ENCODE measurements at regions of chr2 and their contacts with region 1.

Region 1: DNA sequence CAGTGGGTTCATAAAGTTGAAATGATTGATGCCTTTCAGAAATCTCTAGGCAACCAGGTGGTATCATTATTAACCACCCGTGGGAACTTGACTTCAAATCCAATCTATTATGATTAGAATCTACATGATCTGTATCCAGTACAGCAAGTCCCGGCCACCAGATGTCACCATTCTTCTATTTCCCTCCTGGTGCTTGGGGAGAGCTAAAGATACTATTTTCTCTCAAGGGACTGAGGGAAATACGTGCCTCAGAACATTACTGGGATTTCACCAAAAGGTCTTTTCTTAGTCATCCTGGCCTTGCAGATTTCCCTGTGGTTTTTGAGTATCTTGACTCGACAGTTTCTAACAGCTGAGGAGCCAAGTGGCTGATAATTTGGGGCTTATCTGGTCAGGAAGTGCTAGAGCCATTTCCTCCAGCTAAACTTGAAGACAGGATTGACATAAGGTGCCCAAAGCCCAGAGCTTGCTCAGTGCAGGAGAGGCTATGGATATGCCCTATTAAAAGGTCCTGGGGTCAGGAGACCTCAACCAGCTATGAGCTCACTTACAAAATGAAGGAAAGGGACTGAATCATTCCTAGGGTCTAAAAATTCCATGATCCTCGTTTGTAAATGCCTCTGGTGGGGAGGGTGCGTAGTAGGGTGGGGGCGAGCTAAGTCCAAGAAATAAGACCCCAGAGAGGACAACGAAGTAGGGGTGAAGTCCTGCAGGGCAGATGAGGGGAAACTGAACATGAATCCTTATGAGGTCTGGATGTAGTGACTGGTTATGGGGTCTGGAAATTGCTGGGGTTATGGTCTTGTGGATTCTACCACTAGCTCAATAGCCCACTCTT is 135.4 kb upstream of the MGAT5 start:
- DNase-seq: peak; percentile 91
- H3K4me3 ChIP-seq: no peak overlapping the region
- H3K27ac ChIP-seq: peak overlapping the region; percentile 24 to 97 (median 94)
- H3K4me1 ChIP-seq: peaks cover 11 to 33% (median 32%) of the 10 kb centered on the region in 4 donors
- H3K27me3 ChIP-seq: no peaks in the 10 kb centered on the region
- CTCF ChIP-seq: peak; percentile 71 to 84 (median 79)
- EP300 ChIP-seq: no peak
- POLR2A ChIP-seq: no peak

Region 2: GRCh38 chr2:134154246-134154645 is 35.7 kb after region 1 on chr2:
- in situ Hi-C with region 1: no loop called
- intact Hi-C with region 1: no loop called
- DNase-seq: peak; percentile 37
- H3K4me3 ChIP-seq: no peak overlapping the region
- H3K27ac ChIP-seq: no peak overlapping the region
- H3K4me1 ChIP-seq: peaks cover 3 to 29% (median 11%) of the 10 kb centered on the region in 4 donors
- H3K27me3 ChIP-seq: no peaks in the 10 kb centered on the region
- CTCF ChIP-seq: no peak
- EP300 ChIP-seq: no peak
- POLR2A ChIP-seq: no peak

Region 3: GRCh38 chr2:134207564-134208209 is 89.2 kb after region 1 on chr2:
- in situ Hi-C with region 1: loop called in 3 of 4 experiments (anchors 5 to 10 kb)
- intact Hi-C with region 1: no loop called
- DNase-seq: peak; percentile 79
- H3K4me3 ChIP-seq: no peak overlapping the region
- H3K27ac ChIP-seq: no peak overlapping the region
- H3K4me1 ChIP-seq: peaks cover 0 to 31% (median 2%) of the 10 kb centered on the region in 4 donors
- H3K27me3 ChIP-seq: no peaks in the 10 kb centered on the region
- CTCF ChIP-seq: peak; percentile 56 to 86 (median 63)
- EP300 ChIP-seq: no peak
- POLR2A ChIP-seq: no peak

Region 4: DNA sequence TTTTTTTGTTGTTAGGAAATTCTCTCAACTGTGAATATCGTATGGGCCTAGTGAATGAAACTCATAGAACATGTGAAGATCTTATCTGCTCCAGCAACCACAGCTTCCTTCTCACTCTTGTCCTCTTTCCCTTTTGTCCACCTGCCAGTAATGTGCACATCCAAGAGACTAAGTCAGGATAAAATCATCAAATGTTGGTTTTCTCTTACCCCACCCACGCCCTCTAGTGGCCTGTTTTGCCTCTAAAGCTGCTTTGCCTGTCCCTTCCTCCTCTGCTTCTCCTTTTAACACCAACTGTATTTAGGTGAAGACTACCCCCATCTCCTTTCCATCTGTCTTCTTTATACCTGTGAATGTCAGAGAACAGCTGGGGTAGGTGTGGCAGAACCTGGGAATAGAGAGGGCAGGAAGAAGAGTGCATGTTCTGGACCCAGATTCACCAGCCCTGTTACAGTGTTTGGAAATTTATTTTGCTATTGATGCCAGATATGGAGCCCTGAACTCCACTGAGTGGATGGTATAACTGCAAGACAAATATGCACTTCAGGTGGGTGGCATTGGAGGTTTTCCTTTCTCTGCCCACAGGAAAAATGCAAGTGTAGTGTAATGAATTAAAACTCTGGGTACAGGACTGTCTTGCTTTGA is 127.0 kb after region 1 on chr2:
- in situ Hi-C with region 1: no loop called
- intact Hi-C with region 1: loop called (anchors 5 kb)
- DNase-seq: peak; percentile 84
- H3K4me3 ChIP-seq: no peak overlapping the region
- H3K27ac ChIP-seq: no peak overlapping the region
- H3K4me1 ChIP-seq: peaks cover 0 to 36% (median 10%) of the 10 kb centered on the region in 4 donors
- H3K27me3 ChIP-seq: no peaks in the 10 kb centered on the region
- CTCF ChIP-seq: peak; percentile 66 to 75 (median 70)
- EP300 ChIP-seq: no peak
- POLR2A ChIP-seq: no peak

Region 5: GRCh38 chr2:134301099-134301927 is 182.8 kb after region 1 on chr2:
- in situ Hi-C with region 1: no loop called
- intact Hi-C with region 1: no loop called
- DNase-seq: no peak
- H3K4me3 ChIP-seq: no peak overlapping the region
- H3K27ac ChIP-seq: no peak overlapping the region
- H3K4me1 ChIP-seq: peaks cover 0 to 15% (median 7%) of the 10 kb centered on the region in 4 donors
- H3K27me3 ChIP-seq: no peaks in the 10 kb centered on the region
- CTCF ChIP-seq: no peak
- EP300 ChIP-seq: no peak
- POLR2A ChIP-seq: no peak

Region 6: GRCh38 chr2:134411828-134412638 is 293.5 kb after region 1 on chr2:
- in situ Hi-C with region 1: loop called (anchors 5 to 10 kb)
- intact Hi-C with region 1: loop called (anchors 10 kb)
- DNase-seq: peak; percentile 72
- H3K4me3 ChIP-seq: no peak overlapping the region
- H3K27ac ChIP-seq: peak overlapping the region in 3 of 4 donors; percentile 11 to 18 (median 14)
- H3K4me1 ChIP-seq: peaks cover 10 to 38% (median 19%) of the 10 kb centered on the region in 4 donors
- H3K27me3 ChIP-seq: no peaks in the 10 kb centered on the region
- CTCF ChIP-seq: peak; percentile 53 to 75 (median 59)
- EP300 ChIP-seq: no peak
- POLR2A ChIP-seq: no peak

Measured in transverse colon (tissue), 4 donors.